ENCODE measurements at regions of chr5 and their contacts with region 1.

Region 1: DNA sequence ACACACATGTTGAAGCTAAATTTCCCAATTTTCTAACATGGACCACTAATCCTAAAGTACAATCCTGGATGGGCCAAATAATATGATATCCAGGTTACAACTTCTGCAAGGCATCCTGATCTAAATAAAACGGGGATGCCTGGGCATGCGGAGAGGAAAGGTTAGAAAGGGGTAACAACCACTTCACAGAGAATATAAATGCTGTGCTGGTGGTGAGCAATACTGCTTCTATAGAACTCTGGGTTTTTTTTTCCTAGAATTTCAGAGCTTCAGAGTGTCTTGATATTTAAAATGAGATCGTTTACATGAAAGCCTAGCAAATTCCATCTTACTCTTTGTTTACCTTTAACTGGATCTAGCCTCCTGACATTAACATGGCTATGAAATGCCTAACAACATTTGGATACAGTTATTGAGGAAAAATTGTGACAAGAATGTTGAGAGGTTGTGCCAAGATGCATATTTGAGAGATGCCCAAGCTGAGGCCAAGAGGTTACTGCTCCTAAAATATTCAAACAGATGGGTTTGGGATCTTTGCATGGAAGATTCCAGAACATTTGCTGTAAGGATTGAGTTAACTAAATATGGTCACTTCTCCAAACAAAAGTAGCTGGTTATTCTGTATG is 22.4 kb downstream of the TNFAIP8 start:
- DNase-seq: no peak
- H3K4me3 ChIP-seq: no peak overlapping the region
- H3K27ac ChIP-seq: no peak overlapping the region
- H3K4me1 ChIP-seq: peaks cover 0 to 8% (median 1%) of the 10 kb centered on the region in 4 experiments
- H3K27me3 ChIP-seq: no peaks in the 10 kb centered on the region

Region 2: GRCh38 chr5:119131530-119132313 is 246.5 kb before region 1 on chr5:
- CTCF ChIA-PET with region 1: no interaction called
- POLR2A ChIA-PET with region 1: no interaction called
- DNase-seq: no peak
- H3K4me3 ChIP-seq: no peak overlapping the region
- H3K27ac ChIP-seq: no peak overlapping the region
- H3K4me1 ChIP-seq: no peaks in the 10 kb centered on the region
- H3K27me3 ChIP-seq: no peaks in the 10 kb centered on the region

Region 3: GRCh38 chr5:119360905-119361593 is 17.1 kb before region 1 on chr5:
- CTCF ChIA-PET with region 1: interaction called, 17 read pairs
- POLR2A ChIA-PET with region 1: no interaction called
- DNase-seq: no peak
- H3K4me3 ChIP-seq: no peak overlapping the region
- H3K27ac ChIP-seq: no peak overlapping the region
- H3K4me1 ChIP-seq: peaks cover 6 to 50% (median 27%) of the 10 kb centered on the region in 4 experiments
- H3K27me3 ChIP-seq: no peaks in the 10 kb centered on the region

Region 4: GRCh38 chr5:119426057-119426456 is 47.9 kb after region 1 on chr5:
- CTCF ChIA-PET with region 1: no interaction called
- POLR2A ChIA-PET with region 1: no interaction called
- DNase-seq: peak in 2 of 3 donors; percentile 56 to 69
- H3K4me3 ChIP-seq: no peak overlapping the region
- H3K27ac ChIP-seq: no peak overlapping the region
- H3K4me1 ChIP-seq: peaks cover 6 to 25% (median 15%) of the 10 kb centered on the region in 4 experiments
- H3K27me3 ChIP-seq: no peaks in the 10 kb centered on the region

Region 5: DNA sequence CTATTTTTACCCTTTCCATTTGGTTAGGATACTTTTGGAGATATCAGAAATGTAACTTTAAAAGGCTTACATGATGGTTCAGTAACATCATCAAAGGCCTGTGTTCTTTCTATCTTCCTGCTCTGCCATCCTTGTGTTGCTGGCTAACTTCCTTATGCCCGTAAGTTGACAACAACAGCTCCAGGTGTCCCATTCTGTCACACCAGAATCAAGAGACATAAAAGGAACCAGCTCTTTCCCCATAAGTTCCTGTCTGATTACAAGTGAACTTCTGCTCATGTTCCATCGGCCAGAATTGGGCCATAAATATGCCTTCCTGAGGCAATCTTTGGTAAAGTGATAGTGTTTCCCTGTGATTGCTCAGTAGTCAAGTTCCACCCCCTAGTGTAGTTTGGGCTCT is 343.6 kb after region 1 on chr5:
- CTCF ChIA-PET with region 1: no interaction called
- POLR2A ChIA-PET with region 1: no interaction called
- DNase-seq: no peak
- H3K4me3 ChIP-seq: no peak overlapping the region
- H3K27ac ChIP-seq: no peak overlapping the region
- H3K4me1 ChIP-seq: no peaks in the 10 kb centered on the region
- H3K27me3 ChIP-seq: no peaks in the 10 kb centered on the region

Measured in common myeloid progenitor, CD34-positive (primary cell).